MCF 10A (cell line): ENCODE measurements at regions of chr14 and their contacts with region 1.

Region 1: DNA sequence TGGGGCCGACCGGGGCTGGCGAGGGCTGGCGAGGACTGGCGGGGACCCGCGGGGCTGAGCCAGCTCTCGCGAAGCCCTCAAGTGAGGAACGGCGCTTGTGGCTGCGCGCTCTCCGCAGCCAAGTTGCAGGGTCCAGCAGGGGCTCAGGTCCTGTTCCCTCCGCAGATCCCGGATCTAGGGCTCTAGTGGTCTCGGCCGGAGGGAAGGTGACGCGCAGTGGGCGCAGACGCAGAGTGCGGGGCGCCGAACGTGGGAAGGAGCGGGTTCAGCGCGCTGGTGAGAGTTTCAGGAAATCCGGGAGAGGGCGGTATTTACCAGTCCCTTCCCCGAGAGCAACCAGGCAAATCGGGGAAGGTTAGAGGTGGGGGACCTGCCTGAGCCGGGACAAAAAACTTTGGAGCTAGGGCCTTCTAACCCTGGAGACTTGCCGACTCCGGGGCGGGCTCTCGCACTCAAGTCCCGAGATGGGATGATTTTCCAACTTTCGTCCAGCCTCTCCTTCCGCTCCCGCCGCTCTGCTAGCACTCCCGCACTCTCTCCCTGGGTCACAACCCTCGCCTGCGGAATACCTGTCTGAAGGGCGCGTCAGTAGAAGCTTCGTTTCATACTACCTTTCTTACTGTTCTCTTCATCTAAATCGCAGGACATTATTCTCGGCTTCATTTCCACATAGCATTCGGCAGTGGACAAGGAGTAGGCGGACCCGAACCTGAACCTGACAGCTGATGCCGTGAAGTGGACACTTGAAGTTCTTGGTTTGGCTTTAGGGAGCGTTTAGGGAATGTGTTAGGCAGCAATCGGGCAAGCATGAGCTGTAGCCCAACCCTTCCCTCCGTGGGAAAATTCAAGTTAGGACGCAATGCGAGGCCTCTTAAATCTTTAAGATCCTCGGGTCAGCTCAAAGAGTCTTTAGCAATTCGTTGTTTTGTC is 13.6 kb upstream of the PAX9 start:
- DNase-seq: peak; percentile 63
- H3K4me3 Mint-ChIP-seq: peak overlapping the region; percentile 71
- H3K27ac Mint-ChIP-seq: no peak overlapping the region
- H3K4me1 Mint-ChIP-seq: peaks cover 5% of the 10 kb centered on the region
- H3K27me3 Mint-ChIP-seq: no peaks in the 10 kb centered on the region
- CTCF ChIP-seq: peak; percentile 65

Region 2: DNA sequence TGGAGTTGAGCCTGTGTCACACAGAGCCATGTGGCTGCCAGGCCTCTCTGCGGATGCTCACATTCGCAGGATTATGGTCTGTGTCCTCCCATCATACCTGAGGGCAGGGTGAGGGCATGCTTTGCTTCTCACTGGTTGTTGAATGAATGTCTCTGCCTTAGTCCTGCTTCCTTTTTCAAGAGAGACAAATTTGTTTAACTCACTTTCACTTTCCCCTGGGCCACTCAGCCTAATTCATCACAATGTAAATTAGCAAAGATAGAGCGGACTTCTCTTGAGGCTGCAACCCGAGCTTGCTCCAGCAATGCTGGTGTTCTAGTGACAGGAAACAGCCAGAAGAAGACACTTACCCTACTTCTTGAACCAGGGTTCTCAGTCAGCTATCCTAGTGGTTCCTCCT is 21.9 kb before region 1 on chr14:
- CTCF ChIA-PET with region 1: interaction called, 17 read pairs
- POLR2A ChIA-PET with region 1: interaction called, 3 read pairs
- intact Hi-C with region 1: no loop called
- DNase-seq: no peak
- H3K4me3 Mint-ChIP-seq: no peak overlapping the region
- H3K27ac Mint-ChIP-seq: no peak overlapping the region
- H3K4me1 Mint-ChIP-seq: peaks cover 11% of the 10 kb centered on the region
- H3K27me3 Mint-ChIP-seq: no peaks in the 10 kb centered on the region
- CTCF ChIP-seq: no peak

Region 3: DNA sequence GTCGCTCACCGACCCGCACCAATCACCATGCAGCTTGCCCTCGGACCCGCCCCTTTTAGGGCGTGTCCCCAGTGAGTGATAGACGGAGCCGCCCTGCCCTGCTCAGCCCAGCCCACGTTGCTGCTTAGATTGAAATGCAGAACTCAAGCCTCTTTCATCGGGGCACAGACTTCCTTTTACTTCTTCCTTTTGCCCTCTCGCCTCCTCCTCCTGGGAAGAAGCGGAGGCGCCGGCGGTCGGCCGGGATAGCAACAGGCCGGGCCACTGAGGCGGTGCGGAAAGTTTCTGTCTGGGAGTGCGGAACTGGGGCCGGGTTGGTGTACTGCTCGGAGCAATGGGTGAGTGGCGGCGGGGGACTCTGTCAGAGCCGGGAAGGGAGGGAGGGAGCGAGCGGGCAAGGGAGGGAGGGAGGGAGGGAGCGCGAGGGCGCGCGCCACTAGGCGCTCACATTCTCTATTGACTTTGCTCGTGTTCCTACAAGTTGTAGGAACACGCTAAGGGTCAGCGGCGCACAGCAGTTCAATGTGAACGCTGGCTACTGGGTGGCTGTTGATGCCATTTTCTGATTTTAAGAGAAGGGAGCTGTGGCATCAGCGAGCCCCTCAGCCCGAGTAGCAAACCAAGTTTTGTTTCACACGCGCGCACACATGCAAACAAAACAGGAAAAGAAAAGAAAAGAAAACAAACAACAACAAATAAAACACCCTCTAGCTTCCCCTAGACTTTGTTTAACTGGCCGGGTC is 13.8 kb after region 1 on chr14 and contains the start of gene PAX9:
- CTCF ChIA-PET with region 1: interaction called, 41 read pairs
- POLR2A ChIA-PET with region 1: interaction called, 7 read pairs
- intact Hi-C with region 1: no loop called
- DNase-seq: peak; percentile 96
- H3K4me3 Mint-ChIP-seq: peak within 1 kb of the TSS; percentile 97
- H3K27ac Mint-ChIP-seq: peak within 1 kb of the TSS; percentile 92
- H3K4me1 Mint-ChIP-seq: peaks cover 27% of the 10 kb centered on the region
- H3K27me3 Mint-ChIP-seq: no peaks in the 10 kb centered on the region
- CTCF ChIP-seq: no peak
- total RNA-seq, gene PAX9: 5.5 and 7.3 TPM in 2 replicates

Region 4: GRCh38 chr14:36700656-36701055 is 52.6 kb after region 1 on chr14:
- CTCF ChIA-PET with region 1: no interaction called
- POLR2A ChIA-PET with region 1: no interaction called
- intact Hi-C with region 1: no loop called
- DNase-seq: no peak
- H3K4me3 Mint-ChIP-seq: no peak overlapping the region
- H3K27ac Mint-ChIP-seq: no peak overlapping the region
- H3K4me1 Mint-ChIP-seq: peaks cover 5% of the 10 kb centered on the region
- H3K27me3 Mint-ChIP-seq: no peaks in the 10 kb centered on the region
- CTCF ChIP-seq: no peak

Region 5: DNA sequence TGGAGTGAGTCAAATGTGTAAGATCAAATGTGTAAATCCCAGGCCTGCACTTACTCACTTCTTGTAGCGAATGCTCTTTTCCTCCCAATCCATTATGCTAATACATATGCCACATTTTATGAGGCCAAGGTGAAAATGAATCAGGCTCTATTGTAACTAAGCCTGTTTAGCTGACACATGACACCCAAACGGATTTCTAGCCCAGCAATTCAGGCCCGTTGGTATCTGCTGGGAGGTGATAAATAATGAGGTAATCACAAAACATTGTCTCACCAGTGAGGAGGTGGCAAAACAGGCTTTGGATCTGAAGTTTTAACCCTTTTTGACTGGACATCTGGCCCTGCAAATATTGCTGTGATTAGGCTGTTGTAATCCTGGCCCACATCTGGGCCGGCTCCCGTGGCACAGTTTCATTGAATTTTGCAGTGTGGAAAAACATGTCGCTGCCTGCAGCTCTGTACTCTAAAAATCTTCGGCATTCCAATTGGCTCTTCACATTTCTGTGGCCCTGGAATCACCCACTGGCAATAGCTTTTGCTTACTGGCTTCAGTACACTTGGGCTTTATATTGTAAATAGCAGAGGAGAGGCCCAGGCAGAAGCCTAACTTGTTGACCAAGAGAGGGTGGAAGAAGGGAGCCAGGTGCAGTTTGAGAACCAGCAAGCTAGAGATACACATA is 119.7 kb after region 1 on chr14:
- CTCF ChIA-PET with region 1: interaction called, 11 read pairs
- POLR2A ChIA-PET with region 1: no interaction called
- intact Hi-C with region 1: no loop called
- DNase-seq: peak; percentile 55
- H3K4me3 Mint-ChIP-seq: no peak overlapping the region
- H3K27ac Mint-ChIP-seq: peak overlapping the region; percentile 32
- H3K4me1 Mint-ChIP-seq: peaks cover 31% of the 10 kb centered on the region
- H3K27me3 Mint-ChIP-seq: no peaks in the 10 kb centered on the region
- CTCF ChIP-seq: no peak

Region 6: DNA sequence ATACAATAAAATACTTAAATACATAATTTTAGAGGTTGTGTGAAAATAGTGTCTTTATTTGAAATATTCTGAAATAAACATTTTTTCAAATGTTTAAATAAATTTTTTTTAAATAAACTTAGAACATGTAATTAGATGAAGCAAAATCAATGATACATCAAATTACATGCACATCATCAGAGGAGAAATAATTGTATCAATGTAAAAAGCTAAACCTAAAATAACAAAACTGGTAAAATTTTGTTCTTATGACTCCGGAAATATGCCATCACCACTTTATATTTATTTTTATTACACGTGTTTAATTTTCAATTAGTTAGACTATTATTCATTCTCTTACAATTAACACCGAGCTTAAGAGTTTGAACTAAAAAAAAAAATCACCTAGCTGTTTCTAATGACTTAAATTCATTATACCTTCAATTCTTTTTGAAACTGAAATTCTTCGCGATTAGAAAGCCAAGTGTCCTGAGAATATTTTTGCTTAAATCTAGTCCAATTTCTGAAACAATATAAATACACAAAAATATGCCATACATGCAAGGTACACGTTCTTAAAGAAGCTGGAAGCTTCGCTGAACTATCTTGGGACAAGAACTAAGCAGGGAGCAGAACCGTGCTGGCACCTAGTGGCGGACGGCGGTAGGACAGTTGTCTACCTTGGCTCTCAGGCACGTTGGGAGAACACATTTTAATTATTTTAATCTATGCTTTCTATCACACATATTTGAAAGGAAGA is 293.9 kb after region 1 on chr14:
- CTCF ChIA-PET with region 1: interaction called, 157 read pairs
- POLR2A ChIA-PET with region 1: interaction called, 15 read pairs
- intact Hi-C with region 1: loop called (anchors 1 kb)
- DNase-seq: peak; percentile 78
- H3K4me3 Mint-ChIP-seq: no peak overlapping the region
- H3K27ac Mint-ChIP-seq: peak overlapping the region; percentile 96
- H3K4me1 Mint-ChIP-seq: peaks cover 24% of the 10 kb centered on the region
- H3K27me3 Mint-ChIP-seq: no peaks in the 10 kb centered on the region
- CTCF ChIP-seq: peak; percentile 90

Region 7: GRCh38 chr14:37150414-37150813 is 502.3 kb after region 1 on chr14:
- CTCF ChIA-PET with region 1: interaction called, 119 read pairs
- POLR2A ChIA-PET with region 1: interaction called, 9 read pairs
- intact Hi-C with region 1: loop called (anchors 1 kb)
- DNase-seq: peak; percentile 63
- H3K4me3 Mint-ChIP-seq: no peak overlapping the region
- H3K27ac Mint-ChIP-seq: peak overlapping the region; percentile 16
- H3K4me1 Mint-ChIP-seq: peaks cover 14% of the 10 kb centered on the region
- H3K27me3 Mint-ChIP-seq: no peaks in the 10 kb centered on the region
- CTCF ChIP-seq: peak; percentile 54